A673 (cell line): ENCODE measurements at regions of chr11 and their contacts with region 1.

Region 1: GRCh38 chr11:119196833-119197483 is 9.2 kb upstream of the CBL start:
- DNase-seq: peak; percentile 89
- H3K4me3 ChIP-seq: no peak overlapping the region
- H3K27ac ChIP-seq: no peak overlapping the region
- H3K4me1 ChIP-seq: no peaks in the 10 kb centered on the region
- H3K27me3 ChIP-seq: no peaks in the 10 kb centered on the region
- CTCF ChIP-seq: peak; percentile 95

Region 2: DNA sequence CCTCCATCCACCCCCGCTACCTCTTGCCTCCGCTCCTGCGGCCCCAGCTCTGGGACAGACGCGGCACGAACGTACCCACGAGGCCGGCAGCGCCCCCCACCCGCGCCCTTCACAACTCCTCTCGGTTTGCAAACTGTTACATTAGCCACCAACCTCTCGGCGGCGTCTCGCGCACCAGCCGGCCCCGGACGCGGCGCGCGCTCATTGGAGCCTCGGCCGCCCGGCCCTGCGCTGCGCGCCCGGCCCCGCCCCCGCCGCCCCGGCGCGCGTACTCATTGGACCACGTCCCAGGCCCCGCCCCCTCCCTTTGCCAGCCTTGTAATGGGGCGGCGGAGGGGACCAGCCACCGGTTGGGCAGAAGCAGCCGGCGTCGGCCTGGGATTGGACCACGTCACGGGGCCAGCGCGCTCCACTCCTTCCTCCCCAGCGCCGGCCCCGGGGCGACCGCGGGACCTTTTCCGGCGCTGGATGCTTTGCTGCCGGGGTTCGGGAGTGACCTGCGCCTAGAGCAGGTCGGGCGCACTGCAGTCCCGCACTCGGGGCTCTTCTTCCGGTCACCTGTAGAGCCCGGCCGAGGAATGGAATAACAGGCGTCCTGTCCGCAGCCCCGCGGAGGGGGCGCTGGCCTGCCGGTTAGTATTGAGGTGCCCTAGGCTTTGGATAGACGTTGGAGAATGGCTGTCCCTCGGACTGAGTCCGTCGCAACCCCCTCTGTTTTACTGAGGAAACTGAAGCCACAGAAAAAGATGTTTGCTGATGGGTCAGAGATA is 139.8 kb before region 1 on chr11 and contains the start of gene HYOU1:
- CTCF ChIA-PET with region 1: no interaction called
- POLR2A ChIA-PET with region 1: no interaction called
- intact Hi-C with region 1: loop called (anchors 2 kb)
- DNase-seq: peak; percentile 99
- H3K4me3 ChIP-seq: peak within 1 kb of the TSS; percentile 82
- H3K27ac ChIP-seq: peak within 1 kb of the TSS; percentile 96
- H3K4me1 ChIP-seq: peaks cover 13% of the 10 kb centered on the region
- H3K27me3 ChIP-seq: no peaks in the 10 kb centered on the region
- CTCF ChIP-seq: peak; percentile 35; the same call in 1 of the 2 replicates
- total RNA-seq, gene HYOU1: 315 and 328 TPM in 2 replicates

Region 3: DNA sequence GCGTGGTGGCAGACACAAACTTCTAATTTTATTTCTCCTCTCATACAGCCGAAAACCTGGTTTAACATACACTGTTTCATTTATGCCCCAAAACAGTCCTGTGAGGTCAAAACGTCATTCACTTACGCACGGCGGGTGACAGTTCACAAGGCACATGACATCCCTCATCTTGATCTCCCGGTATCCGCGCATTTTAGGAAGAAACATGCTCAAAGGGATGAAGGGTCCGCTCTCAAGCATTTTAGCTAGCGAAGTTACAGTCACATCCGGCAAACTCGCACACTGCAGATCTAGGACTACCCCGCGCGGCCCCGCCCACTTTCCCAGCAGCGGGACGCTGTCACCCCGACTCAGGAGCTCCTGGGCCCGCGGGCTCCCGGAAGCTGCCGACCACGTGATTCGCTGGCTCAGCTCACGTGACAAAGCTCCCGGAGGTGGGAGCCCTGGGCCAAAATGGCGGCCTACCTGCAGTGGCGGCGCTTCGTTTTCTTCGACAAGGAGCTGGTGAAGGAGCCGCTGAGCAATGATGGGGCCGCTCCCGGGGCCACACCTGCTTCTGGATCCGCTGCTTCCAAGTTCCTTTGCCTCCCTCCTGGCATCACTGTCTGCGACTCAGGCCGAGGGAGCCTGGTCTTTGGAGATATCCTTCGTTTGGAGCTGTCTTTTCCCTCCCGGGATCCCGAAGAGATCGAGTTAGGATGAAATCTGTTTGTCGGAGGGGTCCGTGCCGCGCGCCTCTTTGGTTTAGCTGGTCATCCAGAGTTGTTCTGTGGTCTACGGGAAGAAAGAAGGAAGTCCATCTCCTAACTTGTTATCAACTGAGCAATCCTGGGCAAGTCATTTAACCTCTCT is 129.4 kb before region 1 on chr11 and contains the start of gene VPS11:
- CTCF ChIA-PET with region 1: no interaction called
- POLR2A ChIA-PET with region 1: no interaction called
- intact Hi-C with region 1: loop called (anchors 1 kb)
- DNase-seq: peak; percentile 99
- H3K4me3 ChIP-seq: peak within 1 kb of the TSS; percentile 71
- H3K27ac ChIP-seq: peak within 1 kb of the TSS; percentile 73
- H3K4me1 ChIP-seq: peaks cover 5% of the 10 kb centered on the region
- H3K27me3 ChIP-seq: no peaks in the 10 kb centered on the region
- CTCF ChIP-seq: no peak
- total RNA-seq, gene VPS11: 26.7 and 32.4 TPM in 2 replicates

Region 4: DNA sequence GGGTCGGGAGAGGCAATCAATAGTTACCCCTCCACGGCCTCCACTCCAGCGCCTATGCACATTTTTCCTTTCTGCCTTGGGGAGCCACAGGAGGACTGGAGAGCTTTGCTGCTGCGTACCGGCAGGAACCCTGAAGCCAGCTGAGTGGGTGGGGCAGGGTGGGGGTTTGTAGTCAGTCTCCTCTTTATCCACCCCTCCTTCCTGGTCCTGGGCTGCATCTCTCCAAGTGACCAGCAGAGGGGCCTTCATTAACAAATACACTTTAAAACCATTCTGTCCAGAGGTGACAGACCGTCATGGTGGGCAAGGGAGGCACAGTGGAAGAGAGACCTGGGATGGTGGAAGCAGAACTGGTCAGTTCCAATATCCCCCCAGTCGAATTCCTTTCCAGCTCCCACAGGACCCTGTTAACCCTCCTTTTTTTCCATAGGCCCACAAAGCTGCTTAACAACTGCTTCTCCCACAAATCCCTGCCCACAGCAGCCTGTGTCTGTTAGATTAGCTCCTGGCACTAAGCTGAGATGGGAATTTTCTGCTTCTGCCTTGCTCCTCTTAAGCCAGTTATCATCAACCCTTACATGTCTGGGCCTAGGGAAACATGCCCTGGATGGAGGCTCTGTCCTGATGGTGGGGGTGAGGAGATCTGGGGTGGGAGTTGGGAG is 52.0 kb before region 1 on chr11:
- CTCF ChIA-PET with region 1: interaction called, 6 read pairs
- POLR2A ChIA-PET with region 1: no interaction called
- intact Hi-C with region 1: loop called (anchors 2 kb)
- DNase-seq: peak; percentile 71
- H3K4me3 ChIP-seq: no peak overlapping the region
- H3K27ac ChIP-seq: no peak overlapping the region
- H3K4me1 ChIP-seq: peaks cover 10% of the 10 kb centered on the region
- H3K27me3 ChIP-seq: peaks cover 2% of the 10 kb centered on the region
- CTCF ChIP-seq: peak; percentile 44